ENCODE measurements at regions of chr19 and their contacts with region 1.

Region 1: DNA sequence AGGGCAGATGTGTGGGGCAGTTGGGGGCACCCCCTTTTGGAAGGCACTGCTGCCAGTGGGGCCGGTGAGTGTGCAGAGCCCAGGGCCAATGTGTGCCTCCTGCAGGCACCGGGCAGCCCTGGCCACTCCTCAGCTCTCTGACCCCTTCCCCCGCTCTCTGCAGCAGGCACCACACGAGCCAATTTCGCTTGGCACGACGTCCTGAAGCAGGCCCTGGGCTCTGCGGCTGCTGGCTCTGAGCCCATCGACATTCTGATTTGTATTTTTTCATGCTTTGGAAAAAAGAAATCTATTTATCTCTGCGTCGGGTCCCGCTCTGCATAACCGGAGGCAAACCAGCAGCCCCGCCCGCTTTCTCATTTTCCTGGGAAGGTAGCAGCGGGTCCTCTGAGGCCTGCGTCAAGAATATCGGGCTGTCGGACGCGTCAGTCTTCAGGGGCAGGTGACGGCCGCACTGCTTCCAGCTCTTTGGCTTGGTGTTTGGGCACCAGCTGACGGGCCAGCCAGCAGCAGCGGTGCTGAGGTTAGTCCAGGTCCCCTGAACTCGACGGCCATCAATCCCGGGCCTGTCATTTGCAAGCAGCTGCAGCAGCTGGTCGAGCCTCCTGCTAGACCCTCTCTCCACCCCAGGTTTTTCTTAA is 134.3 kb downstream of the KDM4B start:
- DNase-seq: peak; percentile 76
- ATAC-seq: peak; percentile 64

Region 2: GRCh38 chr19:4988770-4989251 is 114.4 kb before region 1 on chr19:
- intact Hi-C with region 1: no loop called
- DNase-seq: no peak
- ATAC-seq: peak; percentile 44

Region 3: GRCh38 chr19:5072115-5072514 is 31.1 kb before region 1 on chr19:
- intact Hi-C with region 1: loop called (anchors 1 kb)
- DNase-seq: no peak
- ATAC-seq: peak; percentile 8

Region 4: GRCh38 chr19:6402837-6403608 is 1299.8 kb after region 1 on chr19:
- intact Hi-C with region 1: loop called (anchors 5 kb)
- DNase-seq: peak; percentile 78
- ATAC-seq: peak; percentile 90

Measured in sciatic nerve (tissue), 2 donors.